HEK293T (cell line): ENCODE measurements at regions of chr19 and their contacts with region 1.

Region 1: GRCh38 chr19:33430674-33431277 is 57.3 kb downstream of the CEBPG start:
- DNase-seq: peak; percentile 82

Region 2: DNA sequence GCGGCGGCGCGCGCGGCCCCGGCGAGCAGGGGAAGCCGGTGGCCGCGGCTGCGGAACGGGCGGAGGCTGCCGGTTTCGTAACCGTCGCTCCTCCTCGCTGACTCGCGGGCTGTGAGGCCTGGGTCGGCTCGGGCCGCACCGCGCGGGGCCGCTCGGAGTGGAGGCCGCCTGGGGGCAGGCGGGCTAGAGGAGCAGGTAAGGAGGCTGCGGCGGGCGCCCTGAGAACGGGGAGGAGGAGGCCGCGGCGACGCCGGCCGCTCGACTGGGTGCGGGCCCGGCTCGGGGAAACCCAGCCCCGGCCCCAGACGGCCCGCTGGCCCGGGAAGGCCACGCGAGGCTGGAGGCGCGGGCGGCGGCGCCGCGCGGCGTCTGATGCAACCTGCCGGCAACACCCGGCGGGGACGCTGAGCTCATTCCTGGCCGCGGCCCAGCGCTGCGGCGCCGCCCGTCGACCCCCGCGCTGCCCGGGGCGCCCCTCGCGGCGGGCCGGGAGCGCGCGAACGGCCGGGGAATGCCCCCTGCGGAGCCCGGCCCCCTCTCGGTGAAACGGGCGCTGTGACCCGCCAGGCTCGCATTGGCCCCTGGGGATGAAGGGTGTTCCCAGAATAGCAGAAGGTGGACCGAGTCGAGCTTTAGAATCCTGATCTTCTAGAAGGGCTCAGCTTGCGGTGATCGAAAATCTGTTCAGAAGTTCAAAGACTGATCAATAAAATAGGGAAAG is 56.9 kb before region 1 on chr19 and contains the start of gene CEBPG:
- CTCF ChIA-PET with region 1: no interaction called
- POLR2A ChIA-PET with region 1: no interaction called
- DNase-seq: peak; percentile 70

Region 3: GRCh38 chr19:33771384-33772101 is 340.8 kb after region 1 on chr19:
- CTCF ChIA-PET with region 1: interaction called, 18 read pairs
- POLR2A ChIA-PET with region 1: no interaction called
- DNase-seq: peak; percentile 81